ENCODE measurements at regions of chr19 and their contacts with region 1.

Region 1: DNA sequence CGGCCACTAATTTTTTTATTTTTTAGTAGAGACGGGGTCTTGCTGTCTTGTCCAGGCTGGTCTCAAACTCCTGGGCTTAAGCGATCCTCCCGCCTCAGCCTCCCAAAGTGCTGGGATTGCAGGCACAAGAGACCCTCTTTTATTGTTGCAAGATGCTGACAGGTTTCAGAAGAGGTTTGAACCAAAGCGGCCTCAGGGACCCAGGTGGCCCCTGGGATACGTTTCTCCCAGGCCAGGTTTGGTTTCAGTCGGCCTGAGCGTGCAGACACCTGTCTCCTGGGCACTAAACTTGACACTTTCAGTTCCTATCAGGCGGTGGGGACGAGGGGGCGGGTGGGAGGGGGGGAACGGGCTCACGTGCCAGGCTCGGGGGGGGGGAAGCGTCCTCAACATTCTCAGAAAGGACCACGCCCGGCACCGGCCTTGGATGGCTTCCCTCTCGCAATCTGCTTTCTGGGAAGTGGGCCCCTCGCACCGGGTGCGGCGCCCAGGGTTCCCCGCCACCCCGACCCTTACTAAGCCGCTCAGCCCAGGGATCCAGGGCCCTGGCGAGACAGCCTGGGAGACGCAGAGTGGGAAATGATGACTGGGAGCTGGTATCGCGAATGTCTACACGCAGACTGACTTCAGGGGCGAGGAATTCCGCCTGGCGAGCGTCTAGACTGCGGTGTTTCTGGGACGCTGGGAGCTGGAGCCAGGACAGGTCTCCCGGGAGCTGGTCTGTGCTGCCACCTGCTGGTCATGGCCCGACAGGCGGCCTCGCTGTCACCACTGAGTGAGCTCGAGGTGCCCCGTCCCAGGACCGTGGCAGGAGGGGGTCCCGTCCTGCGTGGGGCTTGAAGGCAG is 91.6 kb downstream of the GNG7 start:
- DNase-seq: peak; percentile 92
- ATAC-seq: peak; percentile 89
- H3K4me3 Mint-ChIP-seq: peak overlapping the region; percentile 81
- H3K27ac Mint-ChIP-seq: peak overlapping the region; percentile 76
- H3K4me1 Mint-ChIP-seq: peaks cover 55% of the 10 kb centered on the region
- H3K27me3 Mint-ChIP-seq: peaks cover 2% of the 10 kb centered on the region

Region 2: GRCh38 chr19:2461751-2462634 is 148.9 kb before region 1 on chr19:
- CTCF ChIA-PET with region 1: interaction called, 21 read pairs
- POLR2A ChIA-PET with region 1: interaction called, 5 read pairs
- DNase-seq: peak; percentile 83
- ATAC-seq: peak; percentile 81
- H3K4me3 Mint-ChIP-seq: peak overlapping the region; percentile 91
- H3K27ac Mint-ChIP-seq: peak overlapping the region; percentile 91
- H3K4me1 Mint-ChIP-seq: peaks cover 22% of the 10 kb centered on the region
- H3K27me3 Mint-ChIP-seq: no peaks in the 10 kb centered on the region

Region 3: GRCh38 chr19:2469102-2469914 is 141.6 kb before region 1 on chr19:
- CTCF ChIA-PET with region 1: interaction called, 37 read pairs
- POLR2A ChIA-PET with region 1: interaction called, 5 read pairs
- DNase-seq: peak; percentile 57
- ATAC-seq: peak; percentile 16
- H3K4me3 Mint-ChIP-seq: no peak overlapping the region
- H3K27ac Mint-ChIP-seq: peak overlapping the region; percentile 56
- H3K4me1 Mint-ChIP-seq: peaks cover 21% of the 10 kb centered on the region
- H3K27me3 Mint-ChIP-seq: peaks cover 2% of the 10 kb centered on the region

Region 4: DNA sequence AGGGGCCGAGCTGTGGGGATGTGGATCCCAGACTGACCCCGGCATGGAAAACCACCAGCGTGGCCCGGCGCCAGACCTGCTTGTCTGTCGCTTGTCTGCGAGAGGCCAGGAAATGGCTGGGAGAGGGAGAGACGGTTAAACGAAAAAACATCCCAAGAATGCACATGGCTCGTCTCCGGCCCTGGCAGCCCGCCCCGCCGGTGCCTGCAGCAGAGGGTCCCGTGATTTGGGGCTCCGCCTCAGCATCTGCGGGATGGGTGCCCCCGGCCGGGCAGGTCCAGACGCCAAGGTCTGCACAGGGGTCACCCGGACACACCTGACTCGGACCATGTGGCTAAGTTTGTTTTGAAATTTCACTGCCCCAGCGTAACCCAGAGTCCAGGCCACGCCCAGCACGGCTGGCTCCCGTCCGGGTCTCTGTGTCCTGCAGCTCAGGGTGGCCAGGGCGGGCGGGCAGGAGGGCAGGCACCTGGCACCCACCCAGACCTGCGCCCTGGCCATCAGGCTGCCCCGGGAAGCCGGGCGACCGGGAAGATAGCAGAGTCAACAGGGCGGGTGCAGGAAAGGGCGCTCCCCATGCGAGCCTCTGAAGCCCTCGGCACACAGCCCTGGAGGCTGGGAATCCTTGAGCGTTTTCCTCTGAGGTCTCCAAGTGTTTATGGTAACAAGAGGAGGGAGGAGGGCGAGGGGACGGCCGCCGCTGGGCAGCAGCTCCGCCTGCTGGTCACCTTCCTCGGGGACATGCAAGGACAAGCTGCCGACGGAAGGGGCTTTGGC is 31.8 kb before region 1 on chr19:
- CTCF ChIA-PET with region 1: interaction called, 14 read pairs
- POLR2A ChIA-PET with region 1: no interaction called
- DNase-seq: peak; percentile 80
- ATAC-seq: peak; percentile 79
- H3K4me3 Mint-ChIP-seq: peak overlapping the region; percentile 50
- H3K27ac Mint-ChIP-seq: no peak overlapping the region
- H3K4me1 Mint-ChIP-seq: peaks cover 12% of the 10 kb centered on the region
- H3K27me3 Mint-ChIP-seq: peaks cover 4% of the 10 kb centered on the region

Region 5: DNA sequence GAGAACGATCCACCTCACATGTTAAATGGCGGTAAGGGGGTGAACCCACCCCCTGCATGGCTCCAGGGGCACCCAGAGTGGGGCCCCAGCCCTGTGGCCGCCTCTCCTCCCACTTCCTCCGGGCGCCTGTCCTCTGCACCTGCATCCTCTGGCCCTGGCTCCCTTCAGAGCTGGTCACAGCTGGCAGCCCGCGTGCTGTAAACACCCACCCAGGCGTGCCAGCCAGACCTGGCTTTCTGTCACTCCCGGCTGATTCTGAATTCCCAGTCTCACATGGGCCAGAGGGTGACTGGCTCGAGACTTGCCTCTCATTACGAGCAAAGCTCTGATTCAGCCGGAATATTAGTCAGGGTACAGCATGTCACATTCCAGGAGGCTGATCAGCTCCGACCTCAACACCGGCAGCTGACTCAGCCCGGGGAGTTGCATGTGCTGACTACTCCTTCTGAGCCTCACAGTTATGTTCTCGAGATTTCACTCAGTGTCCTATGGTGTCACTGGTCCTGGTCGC is 16.5 kb after region 1 on chr19:
- CTCF ChIA-PET with region 1: interaction called, 34 read pairs
- POLR2A ChIA-PET with region 1: interaction called, 3 read pairs
- DNase-seq: no peak
- ATAC-seq: no peak
- H3K4me3 Mint-ChIP-seq: no peak overlapping the region
- H3K27ac Mint-ChIP-seq: peak overlapping the region; percentile 36
- H3K4me1 Mint-ChIP-seq: peaks cover 39% of the 10 kb centered on the region
- H3K27me3 Mint-ChIP-seq: no peaks in the 10 kb centered on the region

Region 6: DNA sequence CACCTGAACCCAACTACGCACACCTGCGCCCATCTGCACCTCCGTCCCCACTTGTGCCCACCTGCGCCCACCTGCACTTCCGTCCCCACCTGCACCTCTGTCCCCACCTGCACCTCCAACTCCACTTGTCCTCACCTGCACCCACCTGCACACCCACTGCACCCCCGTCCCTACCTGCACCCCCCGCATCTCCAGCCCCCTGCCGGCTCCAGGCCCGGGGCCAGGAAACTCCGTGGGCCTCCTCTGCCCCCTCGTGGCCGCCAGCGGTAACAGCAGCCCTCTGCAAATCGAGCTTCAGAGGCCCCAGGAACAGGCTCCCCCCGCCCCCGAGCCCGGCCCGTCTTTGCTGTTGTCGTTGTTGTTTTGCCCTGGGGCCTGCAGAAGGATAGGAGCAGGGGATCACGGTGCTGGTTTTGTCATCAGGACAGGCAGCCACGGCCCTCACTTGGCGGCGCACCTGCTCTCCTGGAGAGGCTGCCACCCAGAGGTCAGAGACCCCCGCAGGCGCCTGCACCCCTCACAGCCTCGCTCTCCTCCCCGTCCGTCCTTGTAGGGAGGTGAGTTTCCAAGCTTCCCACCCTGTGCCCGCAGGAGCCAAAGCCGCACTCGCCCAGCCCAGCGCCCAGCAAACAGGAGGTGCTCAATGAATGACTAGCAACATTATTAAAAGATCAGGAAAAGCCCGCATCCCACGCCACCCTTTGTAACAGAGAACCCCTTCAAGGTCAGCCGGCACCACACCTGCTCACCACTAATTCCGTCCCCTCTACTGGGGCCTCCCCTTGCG is 26.2 kb after region 1 on chr19:
- CTCF ChIA-PET with region 1: interaction called, 48 read pairs
- POLR2A ChIA-PET with region 1: interaction called, 3 read pairs
- DNase-seq: peak; percentile 84
- ATAC-seq: peak; percentile 84
- H3K4me3 Mint-ChIP-seq: no peak overlapping the region
- H3K27ac Mint-ChIP-seq: no peak overlapping the region
- H3K4me1 Mint-ChIP-seq: peaks cover 14% of the 10 kb centered on the region
- H3K27me3 Mint-ChIP-seq: peaks cover 4% of the 10 kb centered on the region

Region 7: GRCh38 chr19:2691951-2692350 is 81.1 kb after region 1 on chr19:
- CTCF ChIA-PET with region 1: no interaction called
- POLR2A ChIA-PET with region 1: no interaction called
- DNase-seq: no peak
- ATAC-seq: no peak
- H3K4me3 Mint-ChIP-seq: no peak overlapping the region
- H3K27ac Mint-ChIP-seq: no peak overlapping the region
- H3K4me1 Mint-ChIP-seq: no peaks in the 10 kb centered on the region
- H3K27me3 Mint-ChIP-seq: no peaks in the 10 kb centered on the region

Region 8: DNA sequence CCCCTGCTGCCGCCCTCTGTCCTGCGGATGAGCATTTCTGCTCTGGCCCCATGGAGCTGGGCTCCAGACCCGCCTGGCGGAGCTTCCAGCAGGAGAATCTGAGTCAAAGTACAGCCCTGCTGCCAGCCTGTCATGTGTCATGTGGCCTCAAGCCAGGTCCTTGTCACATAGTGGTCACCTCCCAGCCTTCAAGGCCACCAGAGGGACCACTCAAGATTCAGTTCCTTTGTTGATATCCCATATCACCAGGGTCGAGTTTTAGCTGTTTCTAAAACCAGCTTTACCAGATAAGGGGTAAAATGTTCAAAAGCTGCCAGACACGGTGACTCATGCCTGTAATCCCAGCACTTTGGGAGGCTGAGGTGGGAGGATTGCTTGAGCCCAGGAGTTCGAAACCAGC is 187.9 kb after region 1 on chr19:
- CTCF ChIA-PET with region 1: no interaction called
- POLR2A ChIA-PET with region 1: no interaction called
- DNase-seq: no peak
- ATAC-seq: no peak
- H3K4me3 Mint-ChIP-seq: no peak overlapping the region
- H3K27ac Mint-ChIP-seq: no peak overlapping the region
- H3K4me1 Mint-ChIP-seq: no peaks in the 10 kb centered on the region
- H3K27me3 Mint-ChIP-seq: no peaks in the 10 kb centered on the region

Measured in activated CD8-positive, alpha-beta T cell treated with anti-CD3 and anti-CD28 coated beads, Interleukin-2, amount 10 ng/mL, durations not matched to agents 7 days and 5 days (primary cell).